Transverse colon (tissue), 4 donors: ENCODE measurements at regions of chr5 and their contacts with region 1.

Region 1: DNA sequence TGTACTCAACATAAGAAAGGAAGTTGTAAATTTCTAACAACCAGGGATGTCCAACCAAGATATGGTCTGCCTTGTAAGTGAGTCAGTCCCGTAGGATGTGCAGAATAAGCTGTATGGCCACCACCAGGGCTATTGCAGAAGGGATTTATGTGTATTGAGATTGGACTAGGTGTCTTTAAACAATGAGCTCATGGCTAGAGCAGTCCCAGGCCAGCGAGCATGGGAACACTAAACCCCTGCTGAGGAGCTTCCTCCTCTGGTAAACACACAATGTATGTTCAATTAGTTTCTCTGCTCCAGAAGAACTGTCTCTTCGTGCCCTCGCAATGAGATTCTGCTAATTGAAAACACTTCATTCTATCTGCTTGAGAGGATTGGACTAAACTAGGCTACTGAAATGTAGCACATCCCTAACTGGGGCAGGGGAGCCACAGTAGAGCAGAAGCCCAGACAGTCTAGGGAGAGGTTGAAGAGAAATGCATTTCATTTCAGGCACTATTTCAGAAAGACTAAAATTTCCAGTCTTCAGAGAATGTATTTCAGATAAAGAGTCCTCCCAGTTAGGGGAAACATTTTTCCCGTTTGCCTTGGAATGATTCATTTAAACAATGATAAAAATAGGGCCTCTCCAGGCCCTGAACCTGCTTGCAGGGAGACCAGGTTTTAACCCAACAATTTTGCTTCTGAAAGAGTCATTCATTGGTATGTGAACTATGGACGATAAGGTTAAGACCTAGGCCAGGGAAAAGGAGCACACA is 154.7 kb downstream of the FAM114A2 start:
- DNase-seq: no peak
- H3K4me3 ChIP-seq: no peak overlapping the region
- H3K27ac ChIP-seq: no peak overlapping the region
- H3K4me1 ChIP-seq: no peaks in the 10 kb centered on the region
- H3K27me3 ChIP-seq: no peaks in the 10 kb centered on the region
- CTCF ChIP-seq: no peak
- EP300 ChIP-seq: no peak
- POLR2A ChIP-seq: no peak

Region 2: GRCh38 chr5:152723482-152723881 is 1160.6 kb before region 1 on chr5:
- in situ Hi-C with region 1: no loop called
- intact Hi-C with region 1: loop called (anchors 5 kb)
- DNase-seq: no peak
- H3K4me3 ChIP-seq: no peak overlapping the region
- H3K27ac ChIP-seq: no peak overlapping the region
- H3K4me1 ChIP-seq: no peaks in the 10 kb centered on the region
- H3K27me3 ChIP-seq: no peaks in the 10 kb centered on the region
- CTCF ChIP-seq: no peak
- EP300 ChIP-seq: no peak
- POLR2A ChIP-seq: no peak